RWPE1 (cell line): ENCODE measurements at regions of chr16 and their contacts with region 1.

Region 1: DNA sequence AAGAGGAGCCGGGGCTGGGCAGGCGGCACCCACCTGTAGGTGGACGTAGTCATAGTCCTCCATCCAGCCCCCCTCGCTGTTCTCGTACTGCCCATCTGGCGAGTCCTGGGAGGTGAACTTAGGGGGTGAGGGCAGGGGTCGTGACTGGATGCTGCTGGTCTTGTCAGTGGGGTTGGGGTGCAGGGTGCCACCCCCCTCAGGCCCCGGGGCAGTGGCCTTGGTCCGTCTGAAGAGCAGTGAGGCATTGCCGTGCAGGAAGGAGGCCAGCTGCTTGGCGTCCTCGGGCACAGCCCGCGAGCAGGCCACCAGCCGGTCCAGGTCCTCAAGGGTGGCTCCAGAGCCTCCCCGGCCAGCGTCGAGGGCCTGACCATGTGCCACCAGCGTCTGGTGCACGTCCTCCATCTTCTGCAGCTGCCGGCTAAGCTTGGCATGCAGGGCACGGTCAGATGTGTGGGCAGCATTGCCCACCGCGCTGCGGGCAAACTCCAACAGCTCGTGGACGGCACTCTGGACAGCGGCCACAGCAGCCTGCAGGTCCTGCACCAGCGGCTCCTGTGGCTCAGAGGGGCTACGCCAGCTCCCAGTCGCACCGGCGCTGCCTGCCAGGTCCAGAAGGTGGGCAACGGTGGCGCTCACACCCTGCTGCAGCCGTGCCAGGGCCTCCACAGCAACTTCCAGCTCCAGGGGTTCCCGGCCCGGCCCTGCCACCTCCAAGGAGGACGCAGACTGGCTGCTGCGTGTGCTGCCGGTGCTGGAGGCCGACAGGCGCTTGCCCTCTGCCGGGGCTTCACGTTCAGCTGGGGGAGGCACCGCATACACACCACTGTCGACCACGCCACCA is 16.3 kb downstream of the CTRB1 start:
- DNase-seq: no peak
- H3K27ac ChIP-seq: peak overlapping the region; percentile 90
- CTCF ChIP-seq: no peak

Region 2: DNA sequence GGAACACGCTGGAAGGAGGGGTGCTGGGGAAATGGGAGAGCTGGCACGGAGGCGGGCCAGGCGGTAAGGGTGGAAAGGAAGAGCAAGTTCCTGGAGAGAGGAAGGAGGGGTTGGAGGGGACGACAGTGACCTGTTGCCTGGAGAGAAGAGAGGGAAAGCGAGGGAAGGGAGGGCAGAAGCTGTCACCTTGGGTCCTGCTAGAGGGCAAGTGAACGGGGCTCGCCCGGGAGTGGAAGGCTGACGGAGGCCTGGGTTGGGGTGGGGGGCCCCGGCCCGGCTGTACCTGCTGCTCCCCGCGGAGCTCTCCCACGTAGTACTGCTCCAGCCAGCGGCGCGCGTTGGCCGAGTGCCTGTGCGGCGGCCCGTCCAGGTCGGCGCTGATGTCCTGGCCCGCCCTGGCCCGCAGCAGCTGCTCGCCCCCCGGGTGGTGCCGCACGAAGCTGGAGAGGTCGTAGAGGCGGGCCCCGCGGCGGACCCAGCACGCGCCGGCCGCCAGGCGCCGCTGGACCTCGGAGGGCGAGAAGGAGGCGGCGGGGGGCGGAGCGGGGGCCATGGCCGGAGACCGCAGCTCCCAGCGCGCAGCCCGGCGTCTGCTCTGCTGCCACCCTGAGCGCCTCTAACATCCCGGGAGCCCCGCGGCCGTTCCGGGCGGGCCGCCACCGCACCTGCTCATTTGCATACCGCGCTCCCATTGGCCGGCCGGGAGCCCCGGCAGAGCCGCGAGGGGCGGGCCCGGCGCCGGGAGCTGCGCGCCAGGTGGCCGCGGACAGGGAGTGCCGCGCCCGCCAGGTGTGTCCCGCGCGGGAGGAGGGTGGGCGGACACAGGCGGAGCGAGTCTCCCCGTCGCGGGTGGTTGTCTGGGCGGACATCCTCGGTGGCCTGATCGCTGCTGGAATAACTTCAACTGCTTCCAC is 460.6 kb before region 1 on chr16 and contains the start of gene FA2H:
- CTCF ChIA-PET with region 1: no interaction called
- POLR2A ChIA-PET with region 1: no interaction called
- DNase-seq: peak; percentile 98
- H3K27ac ChIP-seq: no peak within 1 kb of the TSS
- CTCF ChIP-seq: peak; percentile 49; the same call in 1 of the 2 replicates

Region 3: GRCh38 chr16:74843719-74844433 is 391.2 kb before region 1 on chr16:
- CTCF ChIA-PET with region 1: no interaction called
- POLR2A ChIA-PET with region 1: no interaction called
- DNase-seq: peak; percentile 30
- H3K27ac ChIP-seq: no peak overlapping the region
- CTCF ChIP-seq: no peak

Region 4: GRCh38 chr16:75053791-75054555 is 181.1 kb before region 1 on chr16:
- CTCF ChIA-PET with region 1: no interaction called
- POLR2A ChIA-PET with region 1: no interaction called
- DNase-seq: no peak
- H3K27ac ChIP-seq: no peak overlapping the region
- CTCF ChIP-seq: no peak

Region 5: GRCh38 chr16:75251280-75252048 is 16.4 kb after region 1 on chr16 and contains the start of gene BCAR1:
- CTCF ChIA-PET with region 1: interaction called, 14 read pairs
- POLR2A ChIA-PET with region 1: interaction called, 3 read pairs
- DNase-seq: peak; percentile 89
- H3K27ac ChIP-seq: peak within 1 kb of the TSS; percentile 98
- CTCF ChIP-seq: no peak

Region 6: GRCh38 chr16:75282466-75283288 is 47.6 kb after region 1 on chr16:
- CTCF ChIA-PET with region 1: interaction called, 13 read pairs
- POLR2A ChIA-PET with region 1: no interaction called
- DNase-seq: no peak
- H3K27ac ChIP-seq: peak overlapping the region; percentile 94
- CTCF ChIP-seq: no peak

Region 7: GRCh38 chr16:75385507-75386152 is 150.6 kb after region 1 on chr16:
- CTCF ChIA-PET with region 1: interaction called, 16 read pairs
- POLR2A ChIA-PET with region 1: no interaction called
- DNase-seq: peak; percentile 41
- H3K27ac ChIP-seq: no peak overlapping the region
- CTCF ChIP-seq: peak; percentile 68